ENCODE measurements at regions of chr1 and their contacts with region 1.

Region 1: DNA sequence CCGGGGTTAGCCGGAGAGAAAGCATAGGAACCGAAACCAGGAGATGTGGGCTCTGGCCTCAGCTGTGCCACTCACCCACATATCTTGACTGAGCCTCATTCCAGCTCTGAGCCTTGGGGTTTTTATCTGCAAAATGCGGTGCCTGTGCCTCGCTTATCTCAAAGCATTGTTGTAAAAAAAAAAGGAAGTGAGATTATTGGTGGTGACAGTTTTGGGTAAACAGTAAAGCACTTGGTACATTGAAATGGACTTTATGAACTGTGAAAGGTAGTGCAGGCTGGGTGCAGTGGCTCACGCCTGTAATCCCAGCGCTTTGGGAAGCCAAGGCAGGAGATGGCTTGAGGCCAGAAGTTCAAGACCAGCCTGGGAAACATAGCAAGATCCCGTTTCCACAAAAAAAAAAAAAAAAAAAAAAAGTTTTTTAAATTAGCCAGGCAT is 3.8 kb downstream of the PTAFR start:
- DNase-seq: peak in 7 of 9 donors; percentile 8 to 55 (median 21)
- ATAC-seq: peak; percentile 60
- H3K4me3 ChIP-seq: no peak overlapping the region
- H3K4me3 Mint-ChIP-seq: peak overlapping the region; percentile 34 to 85 (median 60)
- H3K27ac ChIP-seq: no peak overlapping the region
- H3K27ac Mint-ChIP-seq: peak overlapping the region in 4 of 9 donors; percentile 2 to 66 (median 10)
- H3K4me1 ChIP-seq: peaks cover 36 to 41% of the 10 kb centered on the region in 2 donors
- H3K4me1 Mint-ChIP-seq: peaks cover 39 to 55% (median 50%) of the 10 kb centered on the region in 7 donors
- H3K27me3 ChIP-seq: no peaks in the 10 kb centered on the region
- H3K27me3 Mint-ChIP-seq: peaks cover 0 to 64% (median 0%) of the 10 kb centered on the region in 5 donors

Region 2: DNA sequence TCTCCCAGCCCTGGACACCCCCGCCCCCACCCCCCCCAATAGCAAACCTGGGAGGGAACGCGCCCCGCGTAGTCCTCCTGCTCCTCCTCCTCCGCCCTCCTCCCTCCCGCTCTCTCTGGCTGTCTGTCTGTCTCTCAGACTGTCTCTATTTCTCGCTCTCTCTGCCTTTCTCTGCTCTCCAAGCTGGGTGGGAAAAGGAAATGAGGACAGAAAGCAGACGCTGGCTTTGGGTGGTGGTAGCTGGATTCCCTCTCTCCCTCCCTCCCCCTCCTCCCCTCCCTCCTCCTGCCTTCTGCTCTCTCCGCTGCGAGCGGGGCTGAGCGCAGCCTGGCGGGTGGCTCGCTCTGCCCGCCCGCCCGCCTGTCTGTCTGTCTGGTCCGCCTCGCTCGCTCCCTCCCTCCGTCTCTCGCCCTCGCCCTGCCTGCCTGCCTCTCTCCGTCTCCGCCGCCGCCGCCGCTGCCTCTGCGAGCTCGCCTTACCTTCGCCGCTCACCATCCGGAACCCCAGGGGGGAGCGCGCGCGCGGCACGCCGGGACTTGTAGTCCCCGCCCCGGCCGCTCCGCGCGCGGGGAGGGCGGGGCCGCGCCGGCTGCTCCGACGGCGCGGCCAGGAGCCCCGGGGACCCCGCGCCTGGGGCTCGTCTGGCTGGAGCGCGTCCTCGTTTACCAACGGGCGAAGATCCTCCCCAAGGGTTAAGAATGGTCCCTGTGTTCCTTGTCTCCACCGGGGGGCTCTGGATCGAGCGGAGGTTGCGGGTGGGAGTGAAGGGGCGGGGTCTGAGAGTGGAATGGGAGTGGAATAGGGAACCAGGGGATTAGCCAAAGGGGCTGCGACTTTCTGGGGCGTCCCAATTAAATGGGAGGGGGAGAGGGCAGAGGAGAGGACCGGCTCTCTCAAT is 568.8 kb before region 1 on chr1 and contains the start of gene AHDC1:
- CTCF ChIA-PET with region 1: no interaction called
- POLR2A ChIA-PET with region 1: no interaction called
- intact Hi-C with region 1: no loop called
- DNase-seq: peak; percentile 85 to 93 (median 90)
- ATAC-seq: peak; percentile 89
- H3K4me3 ChIP-seq: peak within 1 kb of the TSS; percentile 81
- H3K4me3 Mint-ChIP-seq: peak within 1 kb of the TSS; percentile 83 to 98 (median 91)
- H3K27ac ChIP-seq: peak within 1 kb of the TSS; percentile 84
- H3K27ac Mint-ChIP-seq: peak within 1 kb of the TSS; percentile 66 to 98 (median 90)
- H3K4me1 ChIP-seq: peaks cover 11 to 37% of the 10 kb centered on the region in 2 donors
- H3K4me1 Mint-ChIP-seq: peaks cover 40 to 49% (median 42%) of the 10 kb centered on the region in 7 donors
- H3K27me3 ChIP-seq: no peaks in the 10 kb centered on the region
- H3K27me3 Mint-ChIP-seq: no peaks in the 10 kb centered on the region
- total RNA-seq, gene AHDC1: 18.4 to 38.8 (median 21.3) TPM

Region 3: GRCh38 chr1:28115267-28115666 is 57.5 kb before region 1 on chr1:
- CTCF ChIA-PET with region 1: no interaction called
- POLR2A ChIA-PET with region 1: no interaction called
- intact Hi-C with region 1: loop called in 1 of 2 experiments (anchors 1 kb)
- DNase-seq: peak in 5 of 9 donors; percentile 5 to 39 (median 16)
- ATAC-seq: peak; percentile 60
- H3K4me3 ChIP-seq: no peak overlapping the region
- H3K4me3 Mint-ChIP-seq: peak overlapping the region in 2 of 10 donors; percentile 5 to 53
- H3K27ac ChIP-seq: no peak overlapping the region
- H3K27ac Mint-ChIP-seq: peak overlapping the region in 1 of 9 donors; percentile 11
- H3K4me1 ChIP-seq: peaks cover 0 to 8% of the 10 kb centered on the region in 2 donors
- H3K4me1 Mint-ChIP-seq: peaks cover 0 to 40% (median 7%) of the 10 kb centered on the region in 7 donors
- H3K27me3 ChIP-seq: no peaks in the 10 kb centered on the region
- H3K27me3 Mint-ChIP-seq: peaks cover 0 to 27% (median 4%) of the 10 kb centered on the region in 5 donors

Region 4: DNA sequence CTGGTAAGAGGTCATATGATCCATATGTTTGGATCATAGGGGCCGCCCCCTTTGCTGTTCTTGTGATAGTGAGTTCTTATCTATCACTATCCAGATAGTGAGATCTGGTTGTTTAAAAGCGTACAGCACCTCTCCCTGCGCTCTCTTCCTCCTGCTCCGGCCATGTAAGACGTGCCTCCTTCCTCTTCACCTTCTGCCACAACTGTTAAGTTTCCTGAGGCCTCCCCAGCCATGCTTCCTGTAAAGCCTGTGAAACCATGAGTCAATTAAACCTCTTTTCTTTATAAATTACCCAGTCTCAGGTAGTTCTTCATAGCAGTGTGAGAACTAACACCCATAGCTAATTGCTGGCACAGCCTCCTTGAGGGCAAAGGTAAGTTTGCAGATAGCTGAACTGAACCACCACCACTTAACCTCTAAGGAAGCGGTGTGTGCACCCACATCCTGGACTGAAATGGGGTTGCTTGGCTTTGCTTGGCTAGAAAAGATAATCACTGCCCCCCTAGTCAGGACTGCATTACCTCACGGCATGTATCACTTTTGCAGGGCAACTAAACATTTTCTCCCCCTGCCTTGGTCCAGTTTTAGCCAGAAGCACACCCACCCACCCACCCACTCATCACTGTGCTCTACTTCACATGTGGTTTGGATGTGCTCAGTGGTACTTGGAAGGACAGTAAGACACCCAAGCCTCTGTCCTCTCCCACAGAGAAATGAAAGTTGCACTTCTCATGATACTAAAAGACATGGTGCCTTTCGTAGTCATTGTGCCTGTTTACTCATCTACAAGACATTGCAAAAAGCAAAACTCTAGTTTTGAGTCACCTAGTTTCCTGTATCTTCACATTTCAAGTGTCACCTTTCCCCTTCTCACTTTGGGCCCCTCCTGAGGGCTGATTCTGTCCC is 26.8 kb after region 1 on chr1:
- CTCF ChIA-PET with region 1: no interaction called
- POLR2A ChIA-PET with region 1: interaction called, 5 read pairs
- intact Hi-C with region 1: loop called in 1 of 2 experiments (anchors 1 kb)
- DNase-seq: peak in 8 of 9 donors; percentile 26 to 73 (median 68)
- ATAC-seq: peak; percentile 91
- H3K4me3 ChIP-seq: peak overlapping the region; percentile 8
- H3K4me3 Mint-ChIP-seq: peak overlapping the region; percentile 54 to 86 (median 71)
- H3K27ac ChIP-seq: no peak overlapping the region
- H3K27ac Mint-ChIP-seq: peak overlapping the region; percentile 65 to 92 (median 80)
- H3K4me1 ChIP-seq: peaks cover 23 to 35% of the 10 kb centered on the region in 2 donors
- H3K4me1 Mint-ChIP-seq: peaks cover 24 to 51% (median 43%) of the 10 kb centered on the region in 7 donors
- H3K27me3 ChIP-seq: no peaks in the 10 kb centered on the region
- H3K27me3 Mint-ChIP-seq: no peaks in the 10 kb centered on the region